ENCODE measurements at regions of chr17 and their contacts with region 1.

Region 1: DNA sequence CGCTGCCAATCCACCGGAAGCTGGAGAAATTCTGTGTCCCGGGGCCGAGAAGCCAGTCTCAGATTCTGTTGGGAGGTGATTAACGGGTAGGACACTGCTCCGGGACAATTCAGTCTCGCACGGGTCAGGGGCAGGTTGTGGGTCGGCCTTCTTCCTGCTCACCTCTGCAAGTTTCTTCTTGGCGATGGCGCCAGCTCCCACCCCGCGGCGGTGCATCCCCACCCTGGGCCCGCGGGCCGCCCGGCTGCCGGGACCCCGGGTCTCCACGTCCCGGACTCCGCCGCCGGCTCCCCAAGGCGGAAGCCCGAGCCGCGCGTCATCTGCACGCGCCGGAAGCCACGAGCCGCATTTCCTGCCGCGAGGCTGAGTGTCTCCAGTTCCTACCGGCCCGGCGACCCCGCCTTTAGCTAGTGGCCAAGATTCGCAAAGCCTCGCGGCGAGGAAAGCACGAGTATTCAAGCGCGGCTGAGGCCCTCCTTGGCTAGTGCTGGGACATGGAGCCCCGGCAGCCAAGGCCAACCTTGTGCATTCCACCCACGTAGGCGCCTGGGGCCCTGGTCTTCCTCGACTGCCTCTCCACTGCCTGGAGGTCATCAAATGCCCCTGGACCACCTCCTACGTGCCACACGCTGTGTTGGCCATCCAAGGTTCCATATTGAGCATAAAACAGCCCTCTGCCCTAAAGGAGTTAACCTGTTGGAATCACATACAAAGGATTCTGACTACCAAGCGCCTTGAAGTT is at the start of gene SNF8:
- DNase-seq: peak; percentile 88
- ATAC-seq: peak; percentile 98
- H3K4me3 ChIP-seq: peak within 1 kb of the TSS; percentile 88
- H3K27ac ChIP-seq: peak within 1 kb of the TSS; percentile 98
- H3K4me1 ChIP-seq: peaks cover 8% of the 10 kb centered on the region
- H3K27me3 ChIP-seq: no peaks in the 10 kb centered on the region
- CTCF ChIP-seq: no peak
- POLR2A ChIP-seq: peak; percentile 91
- RAD21 ChIP-seq: no peak
- total RNA-seq, gene SNF8: 171 and 191 TPM in 2 replicates

Region 2: DNA sequence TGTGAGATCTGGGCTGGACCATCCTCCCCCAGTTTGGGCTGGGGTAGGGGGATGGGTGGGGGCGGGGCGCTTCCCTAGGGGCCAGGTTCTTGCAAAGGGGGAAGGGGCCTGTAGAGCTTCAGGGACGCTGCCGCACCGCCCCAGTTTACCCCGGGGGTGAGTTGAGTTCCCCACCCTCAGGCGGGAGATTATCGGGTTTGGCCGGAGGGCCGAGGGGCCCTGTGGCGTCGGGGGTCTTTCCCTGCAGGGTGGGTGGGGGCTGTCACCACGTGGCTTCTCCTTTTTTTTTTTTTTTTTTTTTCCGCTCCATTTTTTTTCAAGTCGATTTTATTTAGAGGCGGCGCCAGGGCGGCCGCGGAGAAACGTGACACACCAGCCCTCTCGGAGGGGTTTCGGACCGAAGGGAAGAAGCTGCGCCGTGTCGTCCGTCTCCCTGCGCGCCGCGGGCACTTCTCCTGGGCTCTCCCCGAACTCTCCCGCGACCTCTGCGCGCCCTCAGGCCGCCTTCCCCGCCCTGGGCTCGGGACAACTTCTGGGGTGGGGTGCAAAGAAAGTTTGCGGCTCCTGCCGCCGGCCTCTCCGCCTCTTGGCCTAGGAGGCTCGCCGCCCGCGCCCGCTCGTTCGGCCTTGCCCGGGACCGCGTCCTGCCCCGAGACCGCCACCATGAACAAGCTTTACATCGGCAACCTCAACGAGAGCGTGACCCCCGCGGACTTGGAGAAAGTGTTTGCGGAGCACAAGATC is 52.6 kb after region 1 on chr17 and contains the start of gene IGF2BP1:
- CTCF ChIA-PET with region 1: no interaction called
- POLR2A ChIA-PET with region 1: no interaction called
- dilution Hi-C with region 1: no loop called
- in situ Hi-C with region 1: loop called (anchors 5 kb)
- intact Hi-C with region 1: loop called (anchors 1 kb)
- DNase-seq: peak; percentile 78
- ATAC-seq: peak; percentile 50
- H3K4me3 ChIP-seq: peak within 1 kb of the TSS; percentile 93
- H3K27ac ChIP-seq: peak within 1 kb of the TSS; percentile 95
- H3K4me1 ChIP-seq: no peaks in the 10 kb centered on the region
- H3K27me3 ChIP-seq: peaks cover 20% of the 10 kb centered on the region
- CTCF ChIP-seq: no peak
- POLR2A ChIP-seq: no peak
- RAD21 ChIP-seq: no peak
- total RNA-seq, gene IGF2BP1: 10.2 and 11.9 TPM in 2 replicates

Region 3: DNA sequence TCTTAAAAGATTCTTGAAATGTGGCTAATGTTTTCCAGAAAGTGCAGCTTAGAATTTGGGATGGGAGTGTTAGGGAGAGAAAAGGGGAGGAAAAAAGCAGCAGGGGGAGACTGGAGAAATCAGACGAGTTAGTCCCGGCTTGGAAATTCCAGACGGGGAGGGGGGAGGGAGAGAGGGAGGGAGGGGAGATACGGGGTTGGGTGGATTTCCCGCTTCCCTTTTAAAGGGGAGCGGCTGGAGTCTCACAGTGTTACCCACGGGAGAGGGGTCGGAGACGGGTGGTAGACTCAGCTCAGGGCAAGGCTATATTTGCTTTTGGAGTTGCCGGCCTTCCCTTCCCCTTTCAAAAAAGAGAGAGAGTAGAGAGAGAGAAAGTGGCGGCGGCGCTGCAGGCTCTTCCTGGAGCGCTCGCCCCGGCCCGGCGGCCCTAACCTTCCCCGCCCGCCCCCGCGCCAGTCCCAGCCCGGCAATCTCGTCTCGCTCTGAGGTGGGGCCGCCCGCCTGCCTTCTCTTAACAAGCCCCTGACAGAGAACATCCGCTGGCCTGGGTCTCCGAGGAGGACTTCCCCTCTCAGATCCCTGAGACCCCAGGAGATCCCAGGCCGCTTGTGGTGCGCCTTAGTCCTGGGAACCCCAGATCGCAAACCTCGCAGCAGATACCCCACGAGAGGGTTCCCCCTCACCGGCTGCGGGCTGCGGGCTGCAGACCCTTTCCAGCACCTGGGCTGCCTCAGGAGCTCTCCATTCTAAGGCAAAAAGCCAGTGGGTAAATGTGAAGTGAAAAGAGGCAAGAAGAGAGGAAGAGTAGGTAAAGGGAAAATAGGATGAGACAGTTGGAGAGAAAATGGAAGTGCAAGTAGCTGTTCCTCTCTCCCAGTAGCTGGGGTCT is 59.2 kb after region 1 on chr17:
- CTCF ChIA-PET with region 1: no interaction called
- POLR2A ChIA-PET with region 1: interaction called, 4 read pairs
- dilution Hi-C with region 1: no loop called
- in situ Hi-C with region 1: loop called (anchors 5 kb)
- intact Hi-C with region 1: no loop called
- DNase-seq: peak; percentile 37
- ATAC-seq: peak; percentile 74
- H3K4me3 ChIP-seq: peak overlapping the region; percentile 96
- H3K27ac ChIP-seq: peak overlapping the region; percentile 84
- H3K4me1 ChIP-seq: peaks cover 6% of the 10 kb centered on the region
- H3K27me3 ChIP-seq: no peaks in the 10 kb centered on the region
- CTCF ChIP-seq: no peak
- POLR2A ChIP-seq: no peak
- RAD21 ChIP-seq: no peak; the same call in 1 of the 2 replicates